ENCODE measurements at regions of chr6 and their contacts with region 1.

Region 1: DNA sequence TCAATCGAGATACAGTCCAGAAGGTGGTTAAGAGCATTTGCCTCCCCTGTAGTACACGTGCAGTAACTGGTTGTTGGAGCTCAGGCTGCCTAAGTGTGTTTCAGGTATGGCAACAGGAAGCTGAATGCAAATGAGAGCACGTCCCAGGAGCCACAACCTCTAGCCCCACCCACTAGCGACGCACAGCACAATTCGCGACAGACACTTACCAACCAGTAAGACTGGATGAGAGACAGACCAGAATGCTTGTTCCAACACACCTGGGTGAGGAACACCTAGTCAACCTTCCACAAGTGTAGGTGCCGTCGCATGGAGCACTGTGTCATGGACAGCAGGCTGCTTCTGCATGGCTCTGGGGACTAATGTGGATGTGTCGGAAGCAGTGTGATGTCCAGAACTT is 7.2 kb upstream of the SERPINB1 start:
- DNase-seq: no peak
- H3K4me3 ChIP-seq: no peak overlapping the region
- H3K27ac ChIP-seq: no peak overlapping the region
- H3K4me1 ChIP-seq: peaks cover 31% of the 10 kb centered on the region
- H3K27me3 ChIP-seq: no peaks in the 10 kb centered on the region
- CTCF ChIP-seq: no peak

Region 2: GRCh38 chr6:2931970-2932748 is 83.3 kb after region 1 on chr6:
- intact Hi-C with region 1: loop called (anchors 5 kb)
- DNase-seq: peak; percentile 79
- H3K4me3 ChIP-seq: peak overlapping the region; percentile 35
- H3K27ac ChIP-seq: peak overlapping the region; percentile 51
- H3K4me1 ChIP-seq: peaks cover 13% of the 10 kb centered on the region
- H3K27me3 ChIP-seq: no peaks in the 10 kb centered on the region
- CTCF ChIP-seq: peak; percentile 99